ENCODE measurements at regions of chr15 and their contacts with region 1.

Region 1: DNA sequence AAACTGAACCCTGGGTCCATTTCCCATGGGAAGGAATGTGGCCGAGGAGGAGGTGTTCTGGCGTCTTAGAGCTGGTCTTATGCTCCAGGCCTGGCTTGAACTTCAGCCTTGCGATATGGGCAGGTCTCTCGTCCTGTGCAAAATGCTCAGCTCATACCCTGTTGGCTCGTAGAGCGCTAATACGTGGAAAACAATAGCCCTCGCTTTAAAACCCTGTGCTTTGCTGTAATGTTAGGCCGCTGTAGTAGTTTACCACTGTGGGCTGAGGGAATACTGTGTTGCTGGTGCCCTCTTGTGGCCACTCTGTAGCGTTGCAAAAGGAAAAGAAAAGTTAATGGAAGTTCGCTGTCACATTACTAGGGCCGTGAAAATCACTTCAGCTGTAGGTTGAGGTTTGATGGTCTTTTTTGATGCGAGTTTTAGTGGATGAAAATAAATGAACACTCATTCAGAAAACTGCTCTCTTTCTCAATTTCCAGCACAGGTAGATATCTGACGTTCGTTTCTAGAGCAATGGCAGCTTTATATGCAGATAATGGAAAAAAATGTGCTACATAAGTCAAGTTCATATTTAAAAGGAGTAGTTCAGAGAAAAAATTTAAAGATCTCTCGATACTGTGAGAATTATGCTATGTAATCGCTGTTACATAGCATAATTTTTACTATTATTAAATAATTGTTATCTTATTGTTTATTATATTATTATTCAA is 92.9 kb downstream of the MCTP2 start:
- DNase-seq: peak; percentile 62
- H3K4me3 ChIP-seq: no peak overlapping the region
- H3K27ac ChIP-seq: no peak overlapping the region
- H3K4me1 ChIP-seq: no peaks in the 10 kb centered on the region
- H3K27me3 ChIP-seq: no peaks in the 10 kb centered on the region
- CTCF ChIP-seq: peak; percentile 79 to 84
- POLR2A ChIP-seq: no peak

Region 2: GRCh38 chr15:93035953-93036800 is 1288.1 kb before region 1 on chr15:
- CTCF ChIA-PET with region 1: interaction called, 137 read pairs
- POLR2A ChIA-PET with region 1: no interaction called
- dilution Hi-C with region 1: no loop called
- intact Hi-C with region 1: no loop called
- DNase-seq: peak; percentile 34
- H3K4me3 ChIP-seq: no peak overlapping the region
- H3K27ac ChIP-seq: no peak overlapping the region
- H3K4me1 ChIP-seq: no peaks in the 10 kb centered on the region
- H3K27me3 ChIP-seq: no peaks in the 10 kb centered on the region
- CTCF ChIP-seq: peak; percentile 49 to 61
- POLR2A ChIP-seq: no peak

Region 3: DNA sequence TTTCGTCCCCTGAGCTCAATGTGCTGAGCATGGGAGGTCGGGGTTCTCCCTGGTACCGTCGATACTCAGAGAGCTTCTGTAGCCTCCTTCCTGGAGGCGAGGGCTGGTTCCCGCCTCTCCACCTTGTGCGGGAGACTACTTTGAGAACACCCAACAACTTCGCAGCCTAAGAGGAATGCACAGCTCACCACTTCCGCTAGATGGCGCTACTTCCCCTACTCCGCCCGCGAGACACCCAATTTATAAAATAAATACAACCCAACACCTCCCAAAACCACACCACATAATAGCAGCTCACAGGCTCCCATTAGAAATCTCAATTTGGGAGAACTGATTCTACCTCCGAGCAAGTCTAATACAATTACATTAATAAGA is 1236.5 kb before region 1 on chr15:
- CTCF ChIA-PET with region 1: interaction called, 27 read pairs
- POLR2A ChIA-PET with region 1: no interaction called
- dilution Hi-C with region 1: no loop called
- intact Hi-C with region 1: loop called (anchors 1 kb)
- DNase-seq: peak; percentile 47
- H3K4me3 ChIP-seq: no peak overlapping the region
- H3K27ac ChIP-seq: no peak overlapping the region
- H3K4me1 ChIP-seq: peaks cover 3% of the 10 kb centered on the region
- H3K27me3 ChIP-seq: peaks cover 40 to 53% of the 10 kb centered on the region in 2 experiments
- CTCF ChIP-seq: peak; percentile 78 to 82
- POLR2A ChIP-seq: no peak

Region 4: GRCh38 chr15:93997084-93997918 is 327.0 kb before region 1 on chr15:
- CTCF ChIA-PET with region 1: no interaction called
- POLR2A ChIA-PET with region 1: no interaction called
- dilution Hi-C with region 1: no loop called
- intact Hi-C with region 1: loop called (anchors 5 kb)
- DNase-seq: peak; percentile 6
- H3K4me3 ChIP-seq: no peak overlapping the region
- H3K27ac ChIP-seq: no peak overlapping the region
- H3K4me1 ChIP-seq: no peaks in the 10 kb centered on the region
- H3K27me3 ChIP-seq: no peaks in the 10 kb centered on the region
- CTCF ChIP-seq: peak; percentile 37 to 42
- POLR2A ChIP-seq: no peak

Region 5: DNA sequence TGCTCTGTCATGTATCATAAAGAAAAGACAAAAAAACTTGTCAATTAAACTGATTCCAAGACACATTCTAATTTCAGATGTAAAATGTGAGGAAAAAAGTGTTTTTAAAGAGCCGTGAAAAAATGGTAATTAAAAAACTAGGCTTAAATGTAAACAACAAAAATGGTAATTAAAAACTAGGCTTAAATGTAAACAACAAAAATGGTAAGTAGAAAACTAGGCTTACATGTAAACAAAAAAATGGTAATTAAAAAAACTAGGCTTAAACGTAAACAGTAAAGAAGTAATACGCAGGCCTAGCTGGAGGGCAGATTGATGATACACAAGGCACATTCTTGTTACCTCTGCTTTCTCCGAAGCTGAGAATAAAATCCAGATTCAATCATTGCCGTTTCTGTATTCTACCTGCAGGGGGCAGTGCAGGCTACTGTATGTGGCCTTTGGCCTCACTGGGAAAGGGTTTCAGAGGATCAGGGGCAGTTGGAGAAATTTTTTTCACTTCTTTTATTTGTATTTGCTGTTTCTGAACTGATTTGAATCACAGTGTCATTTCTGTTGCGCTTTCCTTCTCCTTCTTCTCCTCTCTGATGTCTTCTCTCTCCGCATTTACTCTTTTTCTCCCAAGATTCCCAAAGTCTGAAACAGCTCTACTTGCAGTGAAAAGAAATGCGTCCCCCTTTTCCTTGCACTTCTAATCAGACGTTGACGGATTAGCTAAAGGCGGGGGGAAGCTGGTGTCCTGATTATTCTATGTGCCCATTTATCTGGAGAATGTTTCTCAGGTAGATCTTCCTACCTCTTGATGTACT is 160.1 kb before region 1 on chr15:
- CTCF ChIA-PET with region 1: interaction called, 33 read pairs
- POLR2A ChIA-PET with region 1: no interaction called
- dilution Hi-C with region 1: no loop called
- intact Hi-C with region 1: loop called (anchors 1 kb)
- DNase-seq: peak; percentile 4
- H3K4me3 ChIP-seq: no peak overlapping the region
- H3K27ac ChIP-seq: no peak overlapping the region
- H3K4me1 ChIP-seq: no peaks in the 10 kb centered on the region
- H3K27me3 ChIP-seq: no peaks in the 10 kb centered on the region
- CTCF ChIP-seq: peak; percentile 38 to 62
- POLR2A ChIP-seq: no peak

Region 6: DNA sequence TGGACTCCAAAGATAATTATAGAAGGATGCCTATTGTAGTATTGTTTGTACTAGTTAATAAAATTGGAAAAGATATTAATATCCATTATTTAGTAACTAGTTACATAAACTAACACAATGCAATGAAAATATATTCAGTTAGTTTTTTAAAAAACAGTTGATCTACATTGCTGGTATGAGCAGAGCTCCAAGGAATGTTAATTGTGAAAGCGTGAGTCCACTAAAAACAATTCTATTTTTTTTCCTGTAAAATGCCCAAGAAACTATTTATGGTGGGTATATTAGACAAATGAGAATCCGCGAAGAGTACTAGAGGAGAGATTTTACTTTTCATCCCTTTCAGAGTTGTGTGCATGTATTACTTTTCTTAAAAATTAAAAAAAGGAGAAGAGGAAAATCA is 11.3 kb after region 1 on chr15:
- CTCF ChIA-PET with region 1: interaction called, 24 read pairs
- POLR2A ChIA-PET with region 1: no interaction called
- dilution Hi-C with region 1: no loop called
- intact Hi-C with region 1: no loop called
- DNase-seq: no peak
- H3K4me3 ChIP-seq: no peak overlapping the region
- H3K27ac ChIP-seq: no peak overlapping the region
- H3K4me1 ChIP-seq: peaks cover 3% of the 10 kb centered on the region
- H3K27me3 ChIP-seq: no peaks in the 10 kb centered on the region
- CTCF ChIP-seq: no peak
- POLR2A ChIP-seq: no peak

Region 7: DNA sequence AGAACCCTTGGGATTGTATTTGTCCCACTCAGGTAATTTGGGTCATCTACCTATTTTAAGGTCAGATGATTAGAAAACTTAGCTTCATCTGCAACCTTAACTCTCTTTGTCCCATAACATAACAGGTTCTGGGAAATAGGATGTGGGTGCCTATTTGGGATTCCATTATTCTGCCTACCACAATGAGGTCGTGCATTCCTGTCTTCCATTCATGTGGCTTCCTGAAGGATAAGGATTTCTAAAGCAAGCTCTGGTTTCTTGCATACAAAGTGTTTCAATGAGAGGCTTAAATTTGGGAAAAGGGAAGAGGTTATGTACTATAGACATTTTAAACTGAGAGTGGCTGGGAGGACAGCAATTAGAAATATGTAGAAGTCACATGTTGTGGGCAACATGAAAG is 97.4 kb after region 1 on chr15:
- CTCF ChIA-PET with region 1: no interaction called
- POLR2A ChIA-PET with region 1: no interaction called
- dilution Hi-C with region 1: no loop called
- intact Hi-C with region 1: no loop called
- DNase-seq: no peak
- H3K4me3 ChIP-seq: no peak overlapping the region
- H3K27ac ChIP-seq: no peak overlapping the region
- H3K4me1 ChIP-seq: no peaks in the 10 kb centered on the region
- H3K27me3 ChIP-seq: no peaks in the 10 kb centered on the region
- CTCF ChIP-seq: no peak
- POLR2A ChIP-seq: no peak

Region 8: DNA sequence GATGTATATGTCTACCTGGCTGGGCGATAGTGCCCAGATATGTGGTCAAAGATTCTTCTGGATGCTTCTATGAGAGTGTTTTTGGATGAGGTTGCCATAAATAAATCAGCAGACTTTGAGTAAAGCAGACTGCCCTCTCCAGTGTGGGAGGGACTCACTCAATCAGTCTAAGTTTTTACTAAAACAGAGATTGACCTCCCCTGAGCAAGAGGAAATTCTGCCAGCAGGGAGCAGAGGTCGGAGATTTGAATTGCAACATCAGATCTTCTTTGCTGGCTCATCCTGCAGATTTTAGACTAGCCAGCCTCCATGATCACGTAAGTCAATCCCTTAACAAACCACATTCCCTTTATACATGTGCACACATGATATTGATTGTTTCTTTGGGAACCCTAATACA is 208.0 kb after region 1 on chr15:
- CTCF ChIA-PET with region 1: no interaction called
- POLR2A ChIA-PET with region 1: no interaction called
- dilution Hi-C with region 1: no loop called
- intact Hi-C with region 1: no loop called
- DNase-seq: no peak
- H3K4me3 ChIP-seq: no peak overlapping the region
- H3K27ac ChIP-seq: no peak overlapping the region
- H3K4me1 ChIP-seq: no peaks in the 10 kb centered on the region
- H3K27me3 ChIP-seq: no peaks in the 10 kb centered on the region
- CTCF ChIP-seq: no peak
- POLR2A ChIP-seq: no peak

Region 9: GRCh38 chr15:94576889-94577533 is 252.7 kb after region 1 on chr15:
- CTCF ChIA-PET with region 1: no interaction called
- POLR2A ChIA-PET with region 1: no interaction called
- dilution Hi-C with region 1: no loop called
- intact Hi-C with region 1: loop called (anchors 1 kb)
- DNase-seq: peak; percentile 28
- H3K4me3 ChIP-seq: no peak overlapping the region
- H3K27ac ChIP-seq: no peak overlapping the region
- H3K4me1 ChIP-seq: no peaks in the 10 kb centered on the region
- H3K27me3 ChIP-seq: no peaks in the 10 kb centered on the region
- CTCF ChIP-seq: peak; percentile 64 to 68
- POLR2A ChIP-seq: no peak

Measured in endothelial cell of umbilical vein (primary cell).